MCF 10A (cell line): ENCODE measurements at regions of chrX and their contacts with region 1.

Region 1: GRCh38 chrX:110847334-110847733 is 51.7 kb upstream of the CHRDL1 start:
- DNase-seq: peak; percentile 79
- H3K4me3 Mint-ChIP-seq: no peak overlapping the region
- H3K27ac Mint-ChIP-seq: no peak overlapping the region
- H3K4me1 Mint-ChIP-seq: peaks cover 17% of the 10 kb centered on the region
- H3K27me3 Mint-ChIP-seq: peaks cover 63% of the 10 kb centered on the region
- CTCF ChIP-seq: peak; percentile 48

Region 2: GRCh38 chrX:110156167-110156754 is 691.1 kb before region 1 on chrX:
- CTCF ChIA-PET with region 1: interaction called, 13 read pairs
- POLR2A ChIA-PET with region 1: no interaction called
- intact Hi-C with region 1: loop called (anchors 2 kb)
- DNase-seq: peak; percentile 29
- H3K4me3 Mint-ChIP-seq: no peak overlapping the region
- H3K27ac Mint-ChIP-seq: no peak overlapping the region
- H3K4me1 Mint-ChIP-seq: peaks cover 12% of the 10 kb centered on the region
- H3K27me3 Mint-ChIP-seq: peaks cover 43% of the 10 kb centered on the region
- CTCF ChIP-seq: peak; percentile 34

Region 3: GRCh38 chrX:110462957-110463356 is 384.4 kb before region 1 on chrX:
- CTCF ChIA-PET with region 1: interaction called, 9 read pairs
- POLR2A ChIA-PET with region 1: no interaction called
- intact Hi-C with region 1: loop called (anchors 1 kb)
- DNase-seq: peak; percentile 6
- H3K4me3 Mint-ChIP-seq: no peak overlapping the region
- H3K27ac Mint-ChIP-seq: no peak overlapping the region
- H3K4me1 Mint-ChIP-seq: no peaks in the 10 kb centered on the region
- H3K27me3 Mint-ChIP-seq: peaks cover 71% of the 10 kb centered on the region
- CTCF ChIP-seq: peak; percentile 30

Region 4: GRCh38 chrX:110665223-110666002 is 181.9 kb before region 1 on chrX:
- CTCF ChIA-PET with region 1: interaction called, 4 read pairs
- POLR2A ChIA-PET with region 1: no interaction called
- intact Hi-C with region 1: loop called (anchors 1 kb)
- DNase-seq: peak; percentile 57
- H3K4me3 Mint-ChIP-seq: no peak overlapping the region
- H3K27ac Mint-ChIP-seq: no peak overlapping the region
- H3K4me1 Mint-ChIP-seq: no peaks in the 10 kb centered on the region
- H3K27me3 Mint-ChIP-seq: peaks cover 65% of the 10 kb centered on the region
- CTCF ChIP-seq: peak; percentile 44

Region 5: DNA sequence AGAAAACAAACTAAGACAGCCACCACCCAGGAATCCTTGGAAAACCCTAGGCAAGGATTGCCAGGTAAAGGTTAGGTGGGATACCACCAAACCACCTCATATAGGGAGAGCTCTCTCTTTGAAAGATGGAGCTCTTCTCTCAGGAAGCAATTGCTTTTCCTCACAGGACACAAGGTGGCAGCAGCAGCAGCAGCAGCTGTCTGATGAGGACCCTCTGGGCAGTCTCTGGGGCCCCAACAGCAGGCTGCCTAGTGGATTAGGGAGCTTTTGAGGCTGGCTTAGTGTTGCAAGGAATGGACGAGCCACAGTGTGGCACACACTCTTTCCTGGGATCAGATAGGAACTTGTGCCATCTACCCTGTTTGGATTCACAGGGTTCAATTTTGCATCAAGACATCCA is 10.4 kb before region 1 on chrX:
- CTCF ChIA-PET with region 1: interaction called, 38 read pairs
- POLR2A ChIA-PET with region 1: interaction called, 3 read pairs
- intact Hi-C with region 1: no loop called
- DNase-seq: no peak
- H3K4me3 Mint-ChIP-seq: no peak overlapping the region
- H3K27ac Mint-ChIP-seq: no peak overlapping the region
- H3K4me1 Mint-ChIP-seq: no peaks in the 10 kb centered on the region
- H3K27me3 Mint-ChIP-seq: peaks cover 45% of the 10 kb centered on the region
- CTCF ChIP-seq: peak; percentile 7

Region 6: GRCh38 chrX:111823128-111823527 is 975.8 kb after region 1 on chrX:
- CTCF ChIA-PET with region 1: no interaction called
- POLR2A ChIA-PET with region 1: no interaction called
- intact Hi-C with region 1: no loop called
- DNase-seq: peak; percentile 14
- H3K4me3 Mint-ChIP-seq: no peak overlapping the region
- H3K27ac Mint-ChIP-seq: no peak overlapping the region
- H3K4me1 Mint-ChIP-seq: no peaks in the 10 kb centered on the region
- H3K27me3 Mint-ChIP-seq: peaks cover 65% of the 10 kb centered on the region
- CTCF ChIP-seq: peak; percentile 42